ENCODE measurements at regions of chr2 and their contacts with region 1.

Region 1: DNA sequence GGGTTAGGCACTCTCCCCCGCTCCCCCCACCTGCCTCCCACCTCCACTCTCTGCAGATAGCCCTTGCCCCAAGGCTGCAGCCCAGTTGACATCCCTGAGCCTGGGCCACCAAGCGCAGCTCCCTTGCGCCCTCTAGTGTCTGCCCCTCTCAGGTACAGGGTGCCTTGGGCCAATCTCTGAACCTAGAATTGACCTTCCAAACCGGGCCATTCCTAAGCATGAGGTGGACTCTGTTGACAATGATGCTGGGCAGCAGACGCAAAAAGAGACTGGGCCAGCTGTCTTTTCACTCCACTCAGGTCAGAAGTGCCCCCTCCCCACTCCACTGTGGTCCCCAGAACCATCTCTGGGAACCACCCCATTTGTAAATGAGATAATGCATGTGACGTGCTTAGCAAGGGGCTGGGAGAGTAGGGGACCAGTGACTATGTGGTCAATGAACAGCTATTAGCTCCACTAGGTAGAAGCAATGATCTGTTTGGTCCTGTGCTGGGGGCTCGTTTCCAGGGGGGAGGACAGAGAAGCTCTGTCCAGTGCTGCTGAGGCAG is 43.3 kb upstream of the PLB1 start:
- DNase-seq: peak; percentile 58
- H3K4me3 ChIP-seq: no peak overlapping the region
- H3K27ac ChIP-seq: no peak overlapping the region
- H3K4me1 ChIP-seq: peaks cover 14% of the 10 kb centered on the region
- H3K27me3 ChIP-seq: no peaks in the 10 kb centered on the region
- CTCF ChIP-seq: peak; percentile 94 to 96
- POLR2A ChIP-seq: no peak

Region 2: GRCh38 chr2:27723372-27724144 is 729.0 kb before region 1 on chr2:
- CTCF ChIA-PET with region 1: interaction called, 14 read pairs
- POLR2A ChIA-PET with region 1: no interaction called
- dilution Hi-C with region 1: no loop called
- intact Hi-C with region 1: loop called (anchors 1 kb)
- DNase-seq: peak; percentile 68
- H3K4me3 ChIP-seq: no peak overlapping the region
- H3K27ac ChIP-seq: no peak overlapping the region
- H3K4me1 ChIP-seq: peaks cover 14% of the 10 kb centered on the region
- H3K27me3 ChIP-seq: no peaks in the 10 kb centered on the region
- CTCF ChIP-seq: peak; percentile 78 to 90
- POLR2A ChIP-seq: no peak

Region 3: DNA sequence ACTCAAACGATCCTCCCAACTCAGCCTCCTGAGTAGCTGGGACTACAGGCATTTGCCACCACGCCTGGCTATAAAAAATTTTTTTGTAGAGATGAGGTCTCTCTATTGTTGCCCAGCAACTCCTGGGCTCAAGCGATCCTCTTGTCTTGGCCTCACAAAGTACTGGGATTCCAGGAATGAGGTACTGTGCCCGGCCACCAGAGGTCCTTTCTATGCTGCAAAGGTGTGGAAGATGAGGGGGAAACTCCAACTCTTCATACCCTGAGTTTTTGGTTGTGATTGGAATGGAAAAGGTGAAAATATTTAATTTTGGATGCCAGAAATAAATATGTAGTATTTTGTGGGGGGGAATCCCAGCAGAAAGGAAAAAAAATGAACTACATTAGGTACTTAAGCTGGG is 645.1 kb before region 1 on chr2:
- CTCF ChIA-PET with region 1: interaction called, 4 read pairs
- POLR2A ChIA-PET with region 1: no interaction called
- dilution Hi-C with region 1: no loop called
- intact Hi-C with region 1: loop called (anchors 1 kb)
- DNase-seq: peak; percentile 57
- H3K4me3 ChIP-seq: no peak overlapping the region
- H3K27ac ChIP-seq: no peak overlapping the region
- H3K4me1 ChIP-seq: peaks cover 18% of the 10 kb centered on the region
- H3K27me3 ChIP-seq: no peaks in the 10 kb centered on the region
- CTCF ChIP-seq: peak; percentile 57 to 63
- POLR2A ChIP-seq: no peak

Region 4: GRCh38 chr2:28155627-28156026 is 297.0 kb before region 1 on chr2:
- CTCF ChIA-PET with region 1: no interaction called
- POLR2A ChIA-PET with region 1: no interaction called
- dilution Hi-C with region 1: no loop called
- intact Hi-C with region 1: loop called (anchors 10 kb)
- DNase-seq: no peak
- H3K4me3 ChIP-seq: no peak overlapping the region
- H3K27ac ChIP-seq: no peak overlapping the region
- H3K4me1 ChIP-seq: no peaks in the 10 kb centered on the region
- H3K27me3 ChIP-seq: no peaks in the 10 kb centered on the region
- CTCF ChIP-seq: peak; percentile 46 to 47
- POLR2A ChIP-seq: no peak

Region 5: GRCh38 chr2:28378679-28379584 is 73.7 kb before region 1 on chr2:
- CTCF ChIA-PET with region 1: no interaction called
- POLR2A ChIA-PET with region 1: no interaction called
- dilution Hi-C with region 1: no loop called
- intact Hi-C with region 1: no loop called
- DNase-seq: no peak
- H3K4me3 ChIP-seq: no peak overlapping the region
- H3K27ac ChIP-seq: no peak overlapping the region
- H3K4me1 ChIP-seq: no peaks in the 10 kb centered on the region
- H3K27me3 ChIP-seq: no peaks in the 10 kb centered on the region
- CTCF ChIP-seq: no peak
- POLR2A ChIP-seq: no peak

Region 6: GRCh38 chr2:28406276-28407096 is 46.1 kb before region 1 on chr2:
- CTCF ChIA-PET with region 1: interaction called, 11 read pairs
- POLR2A ChIA-PET with region 1: no interaction called
- dilution Hi-C with region 1: no loop called
- intact Hi-C with region 1: loop called (anchors 1 kb)
- DNase-seq: peak; percentile 52
- H3K4me3 ChIP-seq: no peak overlapping the region
- H3K27ac ChIP-seq: peak overlapping the region; percentile 79
- H3K4me1 ChIP-seq: peaks cover 73% of the 10 kb centered on the region
- H3K27me3 ChIP-seq: no peaks in the 10 kb centered on the region
- CTCF ChIP-seq: peak in 1 of 2 donors; percentile 10
- POLR2A ChIP-seq: no peak

Region 7: GRCh38 chr2:29033172-29033571 is 580.6 kb after region 1 on chr2:
- CTCF ChIA-PET with region 1: no interaction called
- POLR2A ChIA-PET with region 1: no interaction called
- dilution Hi-C with region 1: no loop called
- intact Hi-C with region 1: no loop called
- DNase-seq: no peak
- H3K4me3 ChIP-seq: no peak overlapping the region
- H3K27ac ChIP-seq: no peak overlapping the region
- H3K4me1 ChIP-seq: no peaks in the 10 kb centered on the region
- H3K27me3 ChIP-seq: peaks cover 0 to 1% of the 10 kb centered on the region in 2 experiments
- CTCF ChIP-seq: no peak
- POLR2A ChIP-seq: no peak

Measured in endothelial cell of umbilical vein (primary cell).